OCI-LY7 (cell line): ENCODE measurements at regions of chr19 and their contacts with region 1.

Region 1: GRCh38 chr19:55308281-55308680 is 16.9 kb downstream of the TMEM150B start:
- DNase-seq: peak; percentile 88
- H3K4me3 ChIP-seq: peak overlapping the region; percentile 66
- H3K27ac ChIP-seq: peak overlapping the region; percentile 92
- H3K4me1 ChIP-seq: peaks cover 59% of the 10 kb centered on the region
- CTCF ChIP-seq: no peak

Region 2: DNA sequence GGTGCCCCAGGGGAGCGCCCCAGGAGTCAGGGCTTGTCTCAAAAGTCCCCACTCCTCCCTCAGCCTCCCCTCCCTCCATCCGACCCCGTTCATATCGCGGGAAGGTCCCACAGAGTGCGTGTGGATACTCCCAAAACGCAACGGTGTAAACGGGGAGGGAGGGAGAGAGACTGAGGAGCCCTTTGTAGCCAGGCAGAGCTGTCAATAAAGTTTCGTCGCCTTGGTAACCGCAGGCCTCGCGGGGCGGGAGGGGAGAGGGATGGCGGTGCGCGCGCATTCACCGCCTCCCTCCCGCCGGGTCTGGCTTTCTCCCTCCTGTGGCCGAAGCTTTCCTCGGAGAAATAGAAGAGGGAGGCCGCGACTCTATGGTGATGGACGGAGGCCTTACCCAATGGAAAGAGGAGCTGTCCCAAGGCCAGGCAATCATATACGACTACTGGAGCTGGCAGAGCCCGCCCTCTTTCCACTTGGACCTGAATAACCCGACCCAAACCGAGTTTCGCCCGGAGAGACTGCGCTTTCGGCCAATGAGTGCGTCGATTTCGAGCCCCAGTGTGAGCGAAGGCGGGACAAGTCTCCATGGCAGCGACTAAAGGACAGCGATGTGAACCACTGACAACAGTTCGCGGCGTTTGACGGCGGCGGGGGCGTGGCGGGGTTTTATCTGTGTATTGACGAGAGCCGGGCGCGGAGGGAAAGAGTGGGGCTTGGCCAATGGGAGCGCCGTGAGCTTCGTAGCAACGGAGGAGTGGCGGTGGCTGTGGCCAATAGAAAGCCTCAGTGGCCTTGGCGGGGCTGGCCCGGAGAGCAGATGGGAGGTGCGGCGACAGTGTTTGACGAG is 31.0 kb after region 1 on chr19 and contains the start of gene KMT5C:
- CTCF ChIA-PET with region 1: interaction called, 6 read pairs
- POLR2A ChIA-PET with region 1: interaction called, 3 read pairs
- intact Hi-C with region 1: loop called (anchors 2 kb)
- DNase-seq: peak; percentile 100
- H3K4me3 ChIP-seq: peak within 1 kb of the TSS; percentile 89
- H3K27ac ChIP-seq: peak within 1 kb of the TSS; percentile 53
- H3K4me1 ChIP-seq: peaks cover 28% of the 10 kb centered on the region
- CTCF ChIP-seq: no peak
- total RNA-seq, gene KMT5C: 21.2 and 22.8 TPM in 2 replicates

Region 3: DNA sequence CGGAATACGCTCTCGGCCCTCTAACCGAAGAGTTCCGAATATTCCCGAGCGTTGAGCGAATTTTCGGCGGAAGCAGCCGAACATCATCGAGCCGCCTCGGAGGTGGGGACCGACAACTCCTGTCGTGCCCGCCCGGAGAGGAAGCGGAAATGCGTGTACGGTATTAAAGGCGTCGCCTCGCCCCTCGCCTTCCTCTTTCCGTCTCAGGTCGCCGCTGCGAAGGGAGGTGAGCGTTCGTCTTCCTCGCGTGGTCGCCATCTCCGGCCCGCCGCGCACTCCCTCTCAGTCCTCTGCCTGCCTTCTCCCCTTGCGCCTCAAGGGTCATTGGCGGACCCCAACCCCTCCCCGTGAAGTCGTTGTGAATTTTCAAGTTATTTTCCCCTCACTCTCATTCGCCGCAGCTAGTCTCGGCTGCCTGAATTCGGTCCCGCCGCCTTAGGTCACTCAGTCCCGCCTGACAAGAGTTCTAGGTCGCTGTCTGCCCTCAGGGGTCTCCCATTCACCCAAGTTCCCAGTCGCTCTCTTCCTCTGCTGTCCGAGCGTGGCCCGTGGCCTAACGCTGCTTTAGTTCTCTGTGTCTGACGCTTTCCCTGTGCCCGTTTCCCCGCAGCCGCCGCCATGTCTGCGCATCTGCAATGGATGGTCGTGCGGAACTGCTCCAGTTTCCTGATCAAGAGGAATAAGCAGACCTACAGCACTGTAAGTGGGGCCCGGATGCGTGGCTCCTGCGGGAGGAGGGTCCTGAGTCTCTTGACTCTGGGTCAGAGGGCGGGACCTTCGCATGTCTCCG is 77.7 kb after region 1 on chr19 and contains the start of gene RPL28:
- CTCF ChIA-PET with region 1: no interaction called
- POLR2A ChIA-PET with region 1: interaction called, 3 read pairs
- intact Hi-C with region 1: loop called (anchors 2 kb)
- DNase-seq: peak; percentile 99
- H3K4me3 ChIP-seq: peak within 1 kb of the TSS; percentile 87
- H3K27ac ChIP-seq: peak within 1 kb of the TSS; percentile 91
- H3K4me1 ChIP-seq: peaks cover 47% of the 10 kb centered on the region
- CTCF ChIP-seq: no peak
- total RNA-seq, gene RPL28: 847 and 872 TPM in 2 replicates